Panc1 (cell line): ENCODE measurements at regions of chr5 and their contacts with region 1.

Region 1: GRCh38 chr5:32709781-32710549 is 1.2 kb upstream of the NPR3 start:
- DNase-seq: peak; percentile 74
- ATAC-seq: peak; percentile 89
- H3K4me3 ChIP-seq: peak overlapping the region; percentile 63 to 71
- H3K27ac ChIP-seq: no peak overlapping the region
- H3K4me1 ChIP-seq: no peaks in the 10 kb centered on the region
- H3K27me3 ChIP-seq: no peaks in the 10 kb centered on the region; the same call in 1 of the 2 replicates
- CTCF ChIP-seq: peak; percentile 89

Region 2: GRCh38 chr5:31664566-31664965 is 1045.4 kb before region 1 on chr5:
- CTCF ChIA-PET with region 1: no interaction called
- POLR2A ChIA-PET with region 1: interaction called, 12 read pairs
- in situ Hi-C with region 1: no loop called
- intact Hi-C with region 1: no loop called
- DNase-seq: no peak
- ATAC-seq: peak; percentile 80; the same call in 1 of the 2 replicates
- H3K4me3 ChIP-seq: no peak overlapping the region
- H3K27ac ChIP-seq: no peak overlapping the region
- H3K4me1 ChIP-seq: no peaks in the 10 kb centered on the region
- H3K27me3 ChIP-seq: peaks cover 19% of the 10 kb centered on the region
- CTCF ChIP-seq: peak; percentile 66

Region 3: DNA sequence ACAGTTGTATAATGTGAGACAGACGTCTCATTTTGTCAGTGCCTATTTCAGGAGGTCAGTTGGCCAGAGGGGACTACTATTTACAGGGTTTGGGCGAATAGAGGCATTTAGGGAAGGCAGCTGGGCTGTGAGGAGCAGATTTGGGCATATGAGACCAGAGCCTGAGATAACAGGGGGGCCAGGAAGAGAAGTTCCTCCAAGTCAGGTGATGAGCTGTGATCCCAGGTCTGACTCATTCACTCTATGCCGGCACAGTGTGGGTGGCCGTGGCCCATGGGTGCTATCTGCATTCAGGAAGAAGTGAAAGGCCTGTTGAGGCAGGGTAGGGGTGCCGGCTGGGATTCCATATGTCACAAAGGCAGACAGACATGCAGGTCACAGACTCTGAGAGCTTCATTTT is 928.2 kb before region 1 on chr5:
- CTCF ChIA-PET with region 1: no interaction called
- POLR2A ChIA-PET with region 1: no interaction called
- in situ Hi-C with region 1: no loop called
- intact Hi-C with region 1: no loop called
- DNase-seq: no peak
- ATAC-seq: no peak
- H3K4me3 ChIP-seq: no peak overlapping the region
- H3K27ac ChIP-seq: no peak overlapping the region
- H3K4me1 ChIP-seq: no peaks in the 10 kb centered on the region
- H3K27me3 ChIP-seq: peaks cover 2% of the 10 kb centered on the region; the same call in 1 of the 2 replicates
- CTCF ChIP-seq: no peak

Region 4: GRCh38 chr5:33180900-33181299 is 470.9 kb after region 1 on chr5:
- CTCF ChIA-PET with region 1: no interaction called
- POLR2A ChIA-PET with region 1: no interaction called
- in situ Hi-C with region 1: no loop called
- intact Hi-C with region 1: loop called (anchors 5 kb)
- DNase-seq: peak; percentile 57
- ATAC-seq: no peak
- H3K4me3 ChIP-seq: no peak overlapping the region
- H3K27ac ChIP-seq: no peak overlapping the region
- H3K4me1 ChIP-seq: no peaks in the 10 kb centered on the region
- H3K27me3 ChIP-seq: no peaks in the 10 kb centered on the region
- CTCF ChIP-seq: peak; percentile 37; the same call in 1 of the 2 replicates

Region 5: DNA sequence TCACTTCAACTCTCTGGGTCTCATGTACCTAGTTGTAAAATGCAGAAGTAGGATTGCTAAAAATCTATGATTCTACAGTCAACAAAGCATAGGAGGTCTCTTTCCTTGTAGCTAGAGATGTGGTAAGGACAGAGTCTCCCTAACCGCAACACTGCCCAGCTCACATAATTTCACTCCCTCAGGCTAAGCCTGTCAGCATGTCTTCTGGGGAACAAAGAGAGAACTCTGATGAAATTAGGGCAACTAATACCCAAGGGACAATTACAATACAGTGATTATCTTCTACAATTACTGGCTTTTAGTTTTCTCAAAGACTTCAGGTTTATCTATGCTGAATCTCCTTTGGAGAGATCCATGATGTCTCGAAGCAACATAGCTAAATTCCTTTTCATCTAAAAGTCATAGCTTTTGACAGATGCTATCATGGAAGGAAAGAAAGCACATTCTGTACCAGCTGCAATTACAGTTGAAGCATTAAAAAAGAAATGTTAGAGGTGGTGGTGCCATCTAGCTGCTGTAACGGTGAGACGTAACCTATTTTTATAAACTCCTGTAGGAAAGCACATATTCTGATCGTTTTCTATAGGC is 589.8 kb after region 1 on chr5:
- CTCF ChIA-PET with region 1: no interaction called
- POLR2A ChIA-PET with region 1: no interaction called
- in situ Hi-C with region 1: no loop called
- intact Hi-C with region 1: loop called (anchors 5 kb)
- DNase-seq: peak; percentile 39
- ATAC-seq: no peak
- H3K4me3 ChIP-seq: no peak overlapping the region
- H3K27ac ChIP-seq: no peak overlapping the region
- H3K4me1 ChIP-seq: no peaks in the 10 kb centered on the region
- H3K27me3 ChIP-seq: no peaks in the 10 kb centered on the region
- CTCF ChIP-seq: peak; percentile 51; the same call in 1 of the 2 replicates

Region 6: DNA sequence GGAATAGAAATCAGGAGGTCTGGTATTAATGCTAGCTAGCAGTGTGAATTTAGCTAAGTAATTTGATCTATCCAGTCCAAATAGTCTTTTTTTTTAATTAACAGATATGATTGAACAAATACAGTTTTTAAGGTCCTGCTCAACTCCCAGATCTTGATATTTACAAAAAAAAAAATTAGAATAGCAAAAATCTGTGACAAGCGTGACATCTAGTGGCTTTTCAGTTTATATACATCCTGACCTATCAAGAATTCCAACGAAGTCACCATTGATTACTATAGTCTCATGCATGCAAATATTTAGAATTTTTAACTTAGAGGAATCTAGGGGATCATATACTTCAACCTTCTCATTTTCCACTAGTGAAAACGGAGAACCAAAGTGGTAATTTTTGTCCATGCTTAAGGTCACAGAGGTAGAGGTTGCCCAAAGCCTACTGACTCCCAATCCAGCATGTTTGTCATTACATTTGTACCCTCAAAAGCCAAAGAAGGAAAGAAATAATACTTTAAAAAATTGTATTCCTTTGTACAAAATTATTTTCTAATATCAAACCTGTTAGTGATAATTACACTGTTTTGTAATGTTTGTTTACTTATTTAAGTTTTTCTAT is 713.2 kb after region 1 on chr5:
- CTCF ChIA-PET with region 1: no interaction called
- POLR2A ChIA-PET with region 1: no interaction called
- in situ Hi-C with region 1: no loop called
- intact Hi-C with region 1: loop called (anchors 2 kb)
- DNase-seq: peak; percentile 28
- ATAC-seq: 0 out of 2 replicates have a peak, but pooled peaks have one; percentile 45
- H3K4me3 ChIP-seq: no peak overlapping the region
- H3K27ac ChIP-seq: no peak overlapping the region
- H3K4me1 ChIP-seq: no peaks in the 10 kb centered on the region
- H3K27me3 ChIP-seq: no peaks in the 10 kb centered on the region; the same call in 1 of the 2 replicates
- CTCF ChIP-seq: peak; percentile 58; the same call in 1 of the 2 replicates